ENCODE measurements at regions of chr3 and their contacts with region 1.

Region 1: DNA sequence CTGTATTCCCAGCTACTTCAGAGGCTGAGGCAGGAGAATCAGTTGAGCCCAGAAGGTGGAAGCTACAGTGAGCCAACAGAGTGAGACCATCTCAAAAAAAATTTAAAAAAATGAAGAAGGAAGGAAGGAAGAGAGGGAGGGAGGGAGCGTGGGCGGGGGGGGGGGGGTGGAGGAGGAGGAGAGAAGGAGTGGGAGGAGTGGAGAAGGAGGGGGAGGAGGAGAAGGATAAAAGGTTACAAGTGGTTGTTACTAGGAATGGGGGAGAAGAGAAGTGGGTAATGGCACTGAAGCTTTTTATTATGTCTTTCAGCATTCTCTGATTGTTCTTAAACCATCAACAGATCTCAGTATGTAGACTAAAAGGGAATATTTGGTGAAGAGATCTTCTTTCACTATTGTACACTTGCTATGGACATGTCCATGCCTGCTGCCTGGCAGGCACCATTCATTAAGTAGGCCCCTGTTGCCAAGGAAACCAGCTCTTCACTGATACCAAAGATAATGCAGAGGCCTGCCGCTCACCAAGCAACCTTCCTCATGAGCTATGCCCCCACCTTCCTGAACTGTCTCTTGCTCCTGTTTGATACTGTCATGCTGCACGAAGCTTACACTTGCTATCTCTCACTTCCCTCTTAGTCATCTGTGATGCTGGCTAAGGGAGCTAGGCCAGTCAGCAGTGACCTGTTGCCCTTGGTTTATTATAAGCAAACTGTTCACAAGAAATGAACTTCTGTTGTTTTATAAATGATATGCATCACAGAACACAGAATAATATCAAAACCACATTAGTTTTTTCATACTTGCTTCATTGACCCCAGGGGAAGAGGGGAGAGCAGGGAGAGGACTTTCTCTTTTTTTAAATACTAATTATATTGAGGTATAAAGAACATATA is 23.1 kb downstream of the EPM2AIP1 start:
- DNase-seq: peak; percentile 26
- ATAC-seq: peak; percentile 99
- H3K4me3 Mint-ChIP-seq: peak overlapping the region; percentile 39
- H3K27ac Mint-ChIP-seq: peak overlapping the region; percentile 93
- H3K4me1 Mint-ChIP-seq: peaks cover 30% of the 10 kb centered on the region
- H3K27me3 Mint-ChIP-seq: no peaks in the 10 kb centered on the region
- CTCF ChIP-seq: no peak

Region 2: DNA sequence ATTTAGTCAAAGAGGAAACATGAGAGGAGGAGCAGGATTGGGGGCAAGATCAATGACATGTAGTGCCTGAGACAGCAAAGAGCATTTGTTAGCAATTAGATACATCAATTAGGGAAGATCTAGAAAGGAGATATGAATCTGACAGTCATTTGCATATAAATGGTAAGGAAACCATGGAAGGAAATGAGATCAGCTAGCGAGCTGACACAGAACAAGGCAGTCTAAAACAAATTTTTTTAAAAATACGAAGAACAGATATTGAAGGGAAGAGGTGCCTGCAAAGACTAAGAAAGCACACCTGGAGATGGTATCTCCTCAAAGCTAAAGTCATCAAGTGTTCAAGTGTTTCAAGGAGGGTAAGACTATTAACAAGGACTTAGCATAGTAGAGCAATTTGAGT is 18.6 kb after region 1 on chr3:
- CTCF ChIA-PET with region 1: interaction called, 10 read pairs
- POLR2A ChIA-PET with region 1: interaction called, 33 read pairs
- intact Hi-C with region 1: loop called (anchors 1 kb)
- DNase-seq: no peak
- ATAC-seq: no peak
- H3K4me3 Mint-ChIP-seq: peak overlapping the region; percentile 76
- H3K27ac Mint-ChIP-seq: peak overlapping the region; percentile 65
- H3K4me1 Mint-ChIP-seq: peaks cover 37% of the 10 kb centered on the region
- H3K27me3 Mint-ChIP-seq: no peaks in the 10 kb centered on the region
- CTCF ChIP-seq: no peak